Activated CD8-positive, alpha-beta T cell treated with anti-CD3 and anti-CD28 coated beads, Interleukin-2, amount 10 ng/mL, durations not matched to agents 7 days and 5 days (primary cell): ENCODE measurements at regions of chr11 and their contacts with region 1.

Region 1: DNA sequence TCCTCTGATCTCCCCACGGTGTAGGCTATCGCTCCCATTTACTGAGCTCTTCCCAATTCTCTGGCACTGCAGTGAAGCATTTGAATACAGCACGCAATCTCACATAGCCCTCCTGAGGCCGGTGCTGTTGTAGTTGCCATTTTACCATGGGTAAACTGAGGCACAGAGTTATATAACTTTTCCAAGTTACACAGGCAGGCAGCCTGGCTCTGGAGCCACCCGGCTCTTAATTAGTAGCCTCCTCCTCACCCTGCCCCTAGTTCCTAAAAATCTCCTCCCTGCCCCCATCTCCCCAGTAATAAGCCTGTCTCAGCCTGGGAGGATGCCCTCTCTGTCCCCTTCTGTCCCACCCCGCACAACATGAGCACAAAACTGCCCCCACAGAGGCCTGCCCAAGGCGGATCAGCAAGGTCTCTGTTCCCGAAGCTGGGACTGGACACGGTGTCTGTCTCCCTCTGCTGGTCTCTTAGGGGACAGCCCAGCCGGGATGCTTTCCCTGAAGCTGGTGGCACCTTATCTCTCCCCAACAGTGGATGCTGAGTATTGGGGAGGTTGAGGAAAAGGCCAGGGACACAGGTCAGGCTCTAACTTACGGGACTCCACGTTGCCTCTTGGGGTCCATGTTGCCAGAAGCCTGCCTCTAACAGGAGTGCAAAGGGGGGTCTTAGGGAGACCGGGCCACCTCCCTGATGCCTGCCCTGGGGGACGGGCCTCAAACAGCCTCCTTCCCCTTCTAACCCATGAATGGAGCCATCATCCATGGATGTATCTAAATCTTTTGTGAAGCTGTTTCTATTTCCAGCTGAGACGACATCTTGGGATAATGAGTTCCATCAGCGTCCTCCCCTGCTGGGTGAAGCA is 9.1 kb upstream of the CLCF1 start:
- DNase-seq: peak; percentile 90
- ATAC-seq: peak; percentile 97
- H3K4me3 Mint-ChIP-seq: no peak overlapping the region
- H3K27ac Mint-ChIP-seq: no peak overlapping the region
- H3K4me1 Mint-ChIP-seq: peaks cover 7% of the 10 kb centered on the region
- H3K27me3 Mint-ChIP-seq: peaks cover 19% of the 10 kb centered on the region

Region 2: GRCh38 chr11:67277231-67277961 is 105.1 kb before region 1 on chr11:
- CTCF ChIA-PET with region 1: interaction called, 10 read pairs
- POLR2A ChIA-PET with region 1: no interaction called
- DNase-seq: peak; percentile 95
- ATAC-seq: peak; percentile 91
- H3K4me3 Mint-ChIP-seq: peak overlapping the region; percentile 81
- H3K27ac Mint-ChIP-seq: peak overlapping the region; percentile 99
- H3K4me1 Mint-ChIP-seq: peaks cover 77% of the 10 kb centered on the region
- H3K27me3 Mint-ChIP-seq: no peaks in the 10 kb centered on the region

Region 3: DNA sequence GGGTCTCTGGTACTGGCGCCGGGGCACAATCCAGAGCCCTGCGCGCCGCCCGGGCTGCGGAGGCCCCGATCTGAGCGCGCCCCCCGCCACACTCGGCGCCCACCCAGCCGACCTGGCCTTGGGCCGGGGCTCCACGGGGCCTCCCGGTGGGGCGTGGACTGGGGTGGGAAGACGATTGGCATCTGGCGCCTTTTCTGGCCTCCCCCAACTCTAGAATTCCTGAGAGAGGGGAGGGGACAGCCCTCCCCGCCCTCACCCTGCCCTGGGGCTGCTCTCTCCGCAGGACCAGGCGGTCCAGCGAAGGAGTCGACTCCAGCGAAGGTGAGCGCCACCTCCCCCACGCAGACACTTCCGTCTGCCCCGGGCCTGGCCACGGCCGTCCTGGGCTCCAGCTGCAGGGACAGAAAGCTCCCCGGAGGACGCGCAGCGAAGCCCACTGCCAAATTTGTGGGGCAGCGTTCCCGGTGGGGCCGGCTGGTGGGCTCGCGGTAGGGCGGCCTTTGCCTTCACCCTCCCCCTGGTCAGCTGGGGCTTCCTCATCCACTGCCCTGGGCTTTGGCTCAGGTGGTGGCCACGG is 78.6 kb before region 1 on chr11:
- CTCF ChIA-PET with region 1: no interaction called
- POLR2A ChIA-PET with region 1: no interaction called
- DNase-seq: no peak
- ATAC-seq: peak; percentile 40
- H3K4me3 Mint-ChIP-seq: peak overlapping the region; percentile 55
- H3K27ac Mint-ChIP-seq: no peak overlapping the region
- H3K4me1 Mint-ChIP-seq: peaks cover 16% of the 10 kb centered on the region
- H3K27me3 Mint-ChIP-seq: no peaks in the 10 kb centered on the region

Region 4: DNA sequence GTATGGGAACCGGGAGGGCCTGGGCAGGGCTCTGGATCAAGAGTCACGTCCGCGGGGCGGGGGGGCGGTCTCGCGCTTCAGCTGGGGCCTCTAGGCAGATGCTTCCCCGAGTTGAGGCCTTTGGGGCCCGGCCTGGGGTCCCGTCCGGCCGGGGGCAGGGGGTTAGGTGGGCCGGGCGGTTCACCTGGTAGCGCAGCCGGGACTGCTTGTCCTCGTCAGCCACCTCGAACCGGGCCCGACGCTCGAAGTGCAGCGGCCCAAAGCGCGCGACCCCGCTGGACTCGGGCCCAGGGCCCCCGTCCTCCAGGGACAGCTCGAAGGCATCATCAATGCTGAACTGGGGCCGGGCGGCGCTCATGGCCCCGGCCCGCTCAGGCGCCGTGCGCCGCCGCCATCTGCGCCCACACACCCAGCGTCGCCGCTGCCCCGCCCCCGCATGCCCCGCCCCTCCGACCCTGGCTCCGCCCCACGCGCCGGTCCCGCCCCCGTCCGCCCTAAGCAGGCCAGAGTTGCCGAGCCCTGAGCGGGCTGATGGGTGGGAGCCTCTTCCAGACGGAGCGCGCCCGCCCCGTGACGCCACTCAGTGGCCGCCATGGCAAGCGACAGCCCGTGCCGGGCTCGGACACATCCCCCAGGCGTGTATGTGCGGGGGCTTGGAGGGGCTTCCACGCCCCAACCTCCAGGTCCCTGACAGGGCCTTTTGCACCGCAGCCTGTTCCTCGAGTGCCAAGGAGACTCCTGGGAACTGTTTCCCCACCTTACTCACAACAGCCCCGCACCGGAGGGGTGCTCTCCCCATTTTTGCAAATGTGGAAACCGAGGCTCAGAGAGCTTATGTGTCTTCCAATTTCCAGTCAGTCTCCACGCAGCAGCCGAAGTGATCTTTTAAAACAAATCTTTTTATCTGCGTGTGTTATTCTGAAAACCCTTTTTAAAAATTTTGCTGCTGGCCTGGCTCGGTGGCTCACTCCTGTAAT is 86.6 kb after region 1 on chr11 and contains the start of gene TMEM134:
- CTCF ChIA-PET with region 1: no interaction called
- POLR2A ChIA-PET with region 1: no interaction called
- DNase-seq: peak; percentile 92
- ATAC-seq: peak; percentile 79
- H3K4me3 Mint-ChIP-seq: peak within 1 kb of the TSS; percentile 87
- H3K27ac Mint-ChIP-seq: peak within 1 kb of the TSS; percentile 83
- H3K4me1 Mint-ChIP-seq: peaks cover 37% of the 10 kb centered on the region
- H3K27me3 Mint-ChIP-seq: no peaks in the 10 kb centered on the region
- total RNA-seq, gene TMEM134: 39.6 to 42.5 TPM